ENCODE measurements at regions of chr9 and their contacts with region 1.

Region 1: DNA sequence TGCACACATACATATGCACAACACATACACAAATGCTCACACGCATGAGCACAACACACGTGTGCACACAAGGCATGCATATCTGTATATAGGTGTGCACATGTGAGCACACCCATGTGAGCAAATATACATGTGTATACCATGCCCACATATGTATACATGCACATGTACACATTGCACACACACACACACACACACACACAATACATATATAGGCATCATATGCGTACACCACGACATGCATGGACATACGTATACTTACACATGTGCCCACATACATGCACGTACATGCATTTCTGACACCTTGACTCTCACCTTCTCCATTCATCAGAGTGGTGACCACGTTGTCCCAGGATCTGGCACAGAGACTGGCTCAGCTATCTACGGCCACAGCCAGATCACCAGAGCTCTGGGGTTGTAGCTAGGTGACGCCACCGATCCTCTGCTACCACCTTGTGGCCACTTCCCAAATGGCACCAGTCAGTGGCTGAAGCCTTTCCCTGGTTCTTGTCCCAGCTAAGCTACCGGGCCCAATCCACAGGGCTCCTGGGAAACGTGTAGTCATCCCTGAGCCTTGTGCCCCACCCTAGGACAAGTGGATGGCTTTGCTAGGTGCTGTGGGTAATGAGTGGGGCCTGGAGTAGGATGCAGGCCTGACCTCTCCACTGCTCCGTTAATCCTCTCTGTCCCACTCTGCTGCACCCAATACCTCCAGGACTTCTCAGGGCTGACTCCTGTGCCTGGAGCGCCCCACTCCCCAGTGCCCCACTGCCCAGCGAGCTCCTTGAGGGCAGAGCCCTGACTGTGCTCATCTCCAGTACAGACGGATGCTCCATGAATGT is 194.4 kb downstream of the RGS3 start:
- DNase-seq: peak; percentile 84
- ATAC-seq: peak; percentile 91
- H3K4me3 Mint-ChIP-seq: no peak overlapping the region
- H3K27ac Mint-ChIP-seq: no peak overlapping the region
- H3K4me1 Mint-ChIP-seq: peaks cover 2% of the 10 kb centered on the region
- H3K27me3 Mint-ChIP-seq: peaks cover 27% of the 10 kb centered on the region

Region 2: DNA sequence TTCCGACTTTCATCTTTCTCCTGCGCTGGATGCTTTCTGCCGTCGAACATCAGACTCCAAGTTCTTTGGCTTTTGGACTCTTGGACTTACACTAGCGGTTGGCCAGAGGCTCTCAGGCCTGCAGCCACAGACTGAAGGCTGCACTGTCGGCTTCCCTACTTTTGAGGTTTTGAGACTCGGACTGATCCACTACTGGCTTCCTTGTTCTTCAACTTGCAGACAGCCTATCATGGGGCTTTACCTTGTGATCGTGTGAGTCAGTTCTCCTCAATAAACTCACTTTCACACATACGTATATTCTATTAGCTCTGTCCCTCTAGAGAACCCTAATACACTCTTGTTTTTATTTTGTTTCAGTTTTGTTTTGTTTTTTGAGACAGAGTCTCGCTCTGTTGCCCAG is 447.1 kb before region 1 on chr9:
- CTCF ChIA-PET with region 1: no interaction called
- POLR2A ChIA-PET with region 1: no interaction called
- DNase-seq: no peak
- ATAC-seq: no peak
- H3K4me3 Mint-ChIP-seq: no peak overlapping the region
- H3K27ac Mint-ChIP-seq: no peak overlapping the region
- H3K4me1 Mint-ChIP-seq: peaks cover 6% of the 10 kb centered on the region
- H3K27me3 Mint-ChIP-seq: no peaks in the 10 kb centered on the region

Region 3: DNA sequence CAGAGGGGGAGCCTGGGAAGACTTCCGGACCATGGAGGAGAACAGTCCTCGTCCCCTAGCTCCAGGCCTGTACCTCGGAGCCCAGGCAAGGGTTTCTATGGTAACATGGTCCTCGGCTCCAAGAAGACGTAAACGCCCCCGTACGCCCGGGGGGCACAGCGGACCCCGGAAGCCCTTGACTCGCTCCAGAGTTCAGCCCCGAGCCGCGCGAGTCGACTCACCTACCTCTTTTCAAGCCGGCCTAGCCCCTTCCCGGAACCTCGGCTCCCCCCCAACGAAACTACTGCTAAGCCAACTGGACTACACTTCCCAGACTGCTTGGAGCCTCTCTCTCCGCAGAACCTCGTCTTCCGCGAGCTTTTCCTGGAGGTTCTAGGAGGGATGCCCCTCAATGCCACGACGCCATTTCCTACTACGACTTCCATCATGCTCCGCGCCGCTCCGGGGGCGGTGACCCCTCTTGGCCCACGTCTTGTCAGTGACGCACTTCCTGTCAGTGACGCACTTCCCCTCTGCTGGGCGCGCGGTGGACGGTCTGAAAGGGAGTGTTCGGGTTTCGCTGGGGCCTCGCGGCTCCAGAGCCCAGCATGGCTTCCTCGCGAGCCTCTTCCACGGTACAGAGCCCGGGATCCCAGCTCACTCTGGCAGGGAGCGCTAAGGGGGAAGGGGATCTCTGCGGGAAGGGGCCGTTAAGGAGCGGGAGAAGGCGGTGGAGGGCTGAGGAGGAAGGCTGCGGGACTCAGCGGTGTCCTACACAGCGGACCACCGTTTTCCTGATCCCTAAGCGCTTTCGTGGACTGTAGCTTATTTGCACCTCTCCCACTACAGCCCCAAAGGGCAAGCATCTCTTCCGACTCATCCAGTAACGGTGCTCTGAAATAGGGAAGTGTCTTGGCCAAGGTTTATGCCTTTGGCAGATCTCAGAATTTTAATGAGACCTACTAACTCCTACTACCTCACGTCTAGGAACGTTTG is 382.5 kb before region 1 on chr9 and contains the starts of genes CDC26 and PRPF4:
- CTCF ChIA-PET with region 1: interaction called, 83 read pairs
- POLR2A ChIA-PET with region 1: no interaction called
- DNase-seq: peak; percentile 98
- ATAC-seq: peak; percentile 95
- H3K4me3 Mint-ChIP-seq: no peak within 1 kb of the TSS
- H3K27ac Mint-ChIP-seq: no peak within 1 kb of the TSS
- H3K4me1 Mint-ChIP-seq: peaks cover 21% of the 10 kb centered on the region
- H3K27me3 Mint-ChIP-seq: no peaks in the 10 kb centered on the region
- total RNA-seq, gene CDC26: 26.1 to 28.9 TPM
- total RNA-seq, gene PRPF4: 33.3 to 37.3 TPM

Region 4: GRCh38 chr9:113401027-113401792 is 256.7 kb before region 1 on chr9 and contains the start of gene ALAD:
- CTCF ChIA-PET with region 1: interaction called, 75 read pairs
- POLR2A ChIA-PET with region 1: no interaction called
- DNase-seq: peak; percentile 99
- ATAC-seq: peak; percentile 100
- H3K4me3 Mint-ChIP-seq: peak within 1 kb of the TSS; percentile 89
- H3K27ac Mint-ChIP-seq: peak within 1 kb of the TSS; percentile 81
- H3K4me1 Mint-ChIP-seq: peaks cover 17% of the 10 kb centered on the region
- H3K27me3 Mint-ChIP-seq: no peaks in the 10 kb centered on the region
- total RNA-seq, gene ALAD: 26.0 to 30.7 TPM

Region 5: GRCh38 chr9:113446323-113446740 is 211.6 kb before region 1 on chr9:
- CTCF ChIA-PET with region 1: interaction called, 169 read pairs
- POLR2A ChIA-PET with region 1: no interaction called
- DNase-seq: peak; percentile 31
- ATAC-seq: no peak
- H3K4me3 Mint-ChIP-seq: no peak overlapping the region
- H3K27ac Mint-ChIP-seq: no peak overlapping the region
- H3K4me1 Mint-ChIP-seq: peaks cover 3% of the 10 kb centered on the region
- H3K27me3 Mint-ChIP-seq: no peaks in the 10 kb centered on the region

Region 6: GRCh38 chr9:113578882-113579282 is 79.0 kb before region 1 on chr9:
- CTCF ChIA-PET with region 1: interaction called, 22 read pairs
- POLR2A ChIA-PET with region 1: no interaction called
- DNase-seq: peak; percentile 94
- ATAC-seq: peak; percentile 75
- H3K4me3 Mint-ChIP-seq: peak overlapping the region; percentile 82
- H3K27ac Mint-ChIP-seq: peak overlapping the region; percentile 99
- H3K4me1 Mint-ChIP-seq: peaks cover 85% of the 10 kb centered on the region
- H3K27me3 Mint-ChIP-seq: no peaks in the 10 kb centered on the region

Region 7: DNA sequence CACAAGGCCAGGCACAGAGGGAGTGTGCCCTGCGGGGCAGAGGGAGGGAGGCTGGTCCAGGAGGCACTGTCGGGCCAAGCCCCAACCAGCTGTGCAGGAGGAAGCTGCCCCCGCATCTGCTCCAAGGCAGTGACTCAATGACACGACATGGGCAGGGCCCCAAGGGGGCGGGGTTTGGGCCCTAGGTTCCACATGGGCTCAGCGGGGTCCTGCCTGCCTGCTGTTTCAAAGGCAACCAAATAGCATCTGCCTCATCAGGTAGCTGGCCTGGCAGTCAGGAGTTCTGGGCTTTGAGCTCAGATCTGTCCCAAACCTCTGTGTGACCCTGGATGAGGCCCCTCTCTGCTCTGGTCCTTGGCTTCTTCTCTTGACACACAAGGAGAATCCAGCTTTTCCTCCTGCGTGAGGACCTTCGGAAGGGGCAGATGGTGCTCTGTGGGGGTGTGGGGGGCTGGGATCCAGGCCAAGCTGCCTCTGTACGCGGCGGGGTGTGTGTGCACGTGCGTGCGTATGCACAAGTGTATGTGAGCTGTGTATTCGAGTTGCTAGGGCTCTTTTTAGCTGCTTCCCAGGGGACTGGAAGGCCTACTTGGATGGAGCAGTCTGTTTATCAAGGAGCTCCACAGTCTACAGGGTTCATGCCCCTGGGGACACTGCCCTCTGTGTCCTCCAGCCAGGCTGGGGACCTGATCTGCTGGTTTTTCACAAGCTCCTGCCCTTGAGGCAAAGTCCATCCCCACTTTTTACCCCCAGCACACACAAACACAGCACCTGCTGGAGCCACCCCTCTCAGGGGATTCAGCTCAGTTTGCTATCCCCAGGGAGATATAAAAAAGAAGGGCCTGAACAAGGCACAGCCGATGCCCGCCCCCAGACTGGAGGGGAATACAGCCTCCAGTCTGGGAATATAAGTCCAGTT is 55.5 kb before region 1 on chr9:
- CTCF ChIA-PET with region 1: interaction called, 11 read pairs
- POLR2A ChIA-PET with region 1: no interaction called
- DNase-seq: peak; percentile 39
- ATAC-seq: peak; percentile 46
- H3K4me3 Mint-ChIP-seq: no peak overlapping the region
- H3K27ac Mint-ChIP-seq: no peak overlapping the region
- H3K4me1 Mint-ChIP-seq: peaks cover 7% of the 10 kb centered on the region
- H3K27me3 Mint-ChIP-seq: no peaks in the 10 kb centered on the region

Region 8: DNA sequence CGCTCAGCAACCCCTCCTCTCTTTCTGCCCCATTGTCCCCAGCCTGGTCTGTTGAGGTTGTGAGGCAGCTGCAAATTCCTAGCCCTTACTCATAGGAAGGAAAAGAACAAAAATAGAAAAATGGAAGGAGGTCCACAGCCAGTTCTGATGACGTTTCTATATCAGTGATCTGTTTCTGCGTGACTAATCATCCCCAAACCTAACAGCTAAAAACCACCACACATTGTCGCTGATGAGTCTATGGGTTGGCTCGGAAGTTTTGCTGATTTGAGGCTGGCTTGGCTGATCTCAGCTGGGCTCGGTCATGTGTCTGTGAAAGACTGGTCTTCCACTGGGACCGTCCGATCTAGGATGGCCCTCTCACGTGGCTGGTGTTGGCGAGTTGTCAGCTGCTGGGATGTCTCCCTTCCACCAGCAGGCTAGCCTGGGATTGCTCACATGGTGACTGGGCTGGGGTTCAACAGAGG is 17.6 kb after region 1 on chr9:
- CTCF ChIA-PET with region 1: interaction called, 11 read pairs
- POLR2A ChIA-PET with region 1: no interaction called
- DNase-seq: no peak
- ATAC-seq: no peak
- H3K4me3 Mint-ChIP-seq: no peak overlapping the region
- H3K27ac Mint-ChIP-seq: no peak overlapping the region
- H3K4me1 Mint-ChIP-seq: no peaks in the 10 kb centered on the region
- H3K27me3 Mint-ChIP-seq: peaks cover 19% of the 10 kb centered on the region